CD14-positive monocyte (primary cell): ENCODE measurements at regions of chr17 and their contacts with region 1.

Region 1: GRCh38 chr17:37576281-37576680 is 32.9 kb downstream of the SYNRG start:
- DNase-seq: no peak
- H3K4me3 ChIP-seq: no peak overlapping the region
- H3K4me3 Mint-ChIP-seq: no peak overlapping the region
- H3K27ac ChIP-seq: no peak overlapping the region
- H3K27ac Mint-ChIP-seq: no peak overlapping the region
- H3K4me1 ChIP-seq: no peaks in the 10 kb centered on the region
- H3K4me1 Mint-ChIP-seq: no peaks in the 10 kb centered on the region
- H3K27me3 ChIP-seq: no peaks in the 10 kb centered on the region
- H3K27me3 Mint-ChIP-seq: no peaks in the 10 kb centered on the region
- CTCF ChIP-seq: no peak

Region 2: DNA sequence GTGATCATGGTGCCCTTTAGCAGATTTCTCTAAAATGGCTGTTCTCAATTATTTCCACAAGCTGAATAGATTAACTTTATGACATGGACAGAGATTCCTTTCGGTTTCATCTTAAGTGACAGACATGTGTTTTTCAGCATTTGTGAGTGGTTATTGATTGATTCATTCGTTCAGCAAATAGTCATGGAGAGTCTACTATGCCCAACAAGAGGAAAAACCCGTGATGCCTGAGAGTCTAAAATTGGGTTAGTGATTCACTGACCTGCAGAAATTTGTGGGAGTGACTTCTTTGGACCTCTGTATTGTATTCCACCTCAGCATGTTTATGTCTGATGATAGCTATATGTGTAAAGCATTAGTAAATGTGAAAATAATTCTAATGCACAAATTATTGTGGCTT is 114.6 kb before region 1 on chr17:
- intact Hi-C with region 1: loop called in 1 of 2 experiments (anchors 5 kb)
- DNase-seq: no peak
- H3K4me3 ChIP-seq: no peak overlapping the region
- H3K4me3 Mint-ChIP-seq: no peak overlapping the region
- H3K27ac ChIP-seq: peak overlapping the region in 1 of 2 donors; percentile 11
- H3K27ac Mint-ChIP-seq: no peak overlapping the region
- H3K4me1 ChIP-seq: no peaks in the 10 kb centered on the region
- H3K4me1 Mint-ChIP-seq: no peaks in the 10 kb centered on the region
- H3K27me3 ChIP-seq: no peaks in the 10 kb centered on the region
- H3K27me3 Mint-ChIP-seq: no peaks in the 10 kb centered on the region
- CTCF ChIP-seq: no peak